Activated CD8-positive, alpha-beta T cell treated with anti-CD3 and anti-CD28 coated beads, Interleukin-2, amount 10 ng/mL, durations not matched to agents 7 days and 5 days (primary cell): ENCODE measurements at regions of chr10 and their contacts with region 1.

Region 1: GRCh38 chr10:97425964-97426775 is at the start of gene PGAM1:
- DNase-seq: peak; percentile 96
- ATAC-seq: peak; percentile 89
- H3K4me3 Mint-ChIP-seq: peak within 1 kb of the TSS; percentile 91
- H3K27ac Mint-ChIP-seq: peak within 1 kb of the TSS; percentile 94
- H3K4me1 Mint-ChIP-seq: peaks cover 40% of the 10 kb centered on the region
- H3K27me3 Mint-ChIP-seq: no peaks in the 10 kb centered on the region
- total RNA-seq, gene PGAM1: 517 to 529 TPM

Region 2: DNA sequence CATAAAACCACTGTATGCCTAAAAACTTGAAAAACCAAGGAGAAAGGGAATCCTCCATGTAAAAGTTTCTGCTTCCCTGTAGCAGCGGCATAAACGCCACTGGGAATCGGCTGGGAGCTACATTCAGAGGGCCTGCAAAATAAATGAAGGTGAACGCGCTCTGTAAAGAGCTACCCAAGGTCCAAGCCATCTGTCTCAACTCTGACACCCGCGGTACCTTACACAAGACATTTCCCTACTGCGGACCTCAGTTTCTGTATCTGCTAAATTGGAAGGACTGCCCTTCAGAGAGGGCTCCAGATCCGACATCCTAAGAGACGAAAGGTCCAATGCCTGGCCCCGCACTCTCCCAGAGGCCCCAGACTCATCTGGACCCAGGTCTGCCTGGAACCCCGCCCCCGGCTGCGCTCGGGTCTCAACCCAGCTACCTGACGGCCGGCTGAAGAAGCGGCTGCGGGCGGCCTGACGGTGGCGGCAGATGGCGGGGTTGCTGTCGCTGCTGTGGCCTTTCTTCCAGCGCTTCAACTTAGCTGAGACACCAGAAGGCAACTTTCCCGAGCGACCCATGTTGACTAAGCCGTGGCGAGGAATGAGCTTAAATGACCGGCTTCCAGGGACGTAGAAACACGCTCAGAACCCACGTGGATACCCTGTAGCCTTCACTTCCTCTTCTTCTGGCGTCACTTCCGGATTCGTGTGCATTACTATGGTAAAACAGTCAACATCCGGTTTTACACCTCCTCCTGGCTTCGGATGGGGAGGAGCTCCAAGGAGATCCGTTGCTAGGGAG is 25.3 kb before region 1 on chr10 and contains the start of gene RRP12:
- CTCF ChIA-PET with region 1: interaction called, 9 read pairs
- POLR2A ChIA-PET with region 1: interaction called, 10 read pairs
- DNase-seq: peak; percentile 95
- ATAC-seq: peak; percentile 87
- H3K4me3 Mint-ChIP-seq: peak within 1 kb of the TSS; percentile 95
- H3K27ac Mint-ChIP-seq: peak within 1 kb of the TSS; percentile 96
- H3K4me1 Mint-ChIP-seq: peaks cover 19% of the 10 kb centered on the region
- H3K27me3 Mint-ChIP-seq: no peaks in the 10 kb centered on the region
- total RNA-seq, gene RRP12: 30.9 to 35.6 TPM

Region 3: GRCh38 chr10:97407211-97407951 is 18.8 kb before region 1 on chr10:
- CTCF ChIA-PET with region 1: interaction called, 34 read pairs
- POLR2A ChIA-PET with region 1: interaction called, 10 read pairs
- DNase-seq: peak; percentile 79
- ATAC-seq: peak; percentile 95
- H3K4me3 Mint-ChIP-seq: peak overlapping the region; percentile 29
- H3K27ac Mint-ChIP-seq: peak overlapping the region; percentile 73
- H3K4me1 Mint-ChIP-seq: peaks cover 19% of the 10 kb centered on the region
- H3K27me3 Mint-ChIP-seq: no peaks in the 10 kb centered on the region

Region 4: GRCh38 chr10:97412891-97413304 is 13.3 kb before region 1 on chr10:
- CTCF ChIA-PET with region 1: interaction called, 34 read pairs
- POLR2A ChIA-PET with region 1: interaction called, 10 read pairs
- DNase-seq: peak; percentile 58
- ATAC-seq: peak; percentile 6
- H3K4me3 Mint-ChIP-seq: peak overlapping the region; percentile 18
- H3K27ac Mint-ChIP-seq: peak overlapping the region; percentile 84
- H3K4me1 Mint-ChIP-seq: peaks cover 57% of the 10 kb centered on the region
- H3K27me3 Mint-ChIP-seq: no peaks in the 10 kb centered on the region

Region 5: DNA sequence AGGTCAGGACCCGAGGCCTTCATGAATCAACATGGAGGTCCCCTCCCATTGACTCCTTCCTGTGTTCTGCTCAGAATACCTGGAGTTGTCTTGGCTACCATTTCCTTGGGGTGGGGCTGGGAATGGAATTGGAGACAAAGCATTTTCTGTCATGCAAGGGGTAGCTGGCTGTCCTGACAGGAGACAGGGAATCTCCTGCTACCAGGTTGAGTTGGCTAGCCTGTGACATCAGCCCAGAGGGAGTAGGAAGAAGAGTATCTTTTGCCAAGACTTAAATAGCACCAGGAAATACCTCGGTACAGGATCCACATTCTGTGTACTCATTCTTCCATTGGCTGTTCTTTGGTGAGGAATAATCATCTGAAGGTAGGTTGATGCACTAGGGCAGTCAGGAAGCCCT is 24.7 kb after region 1 on chr10:
- CTCF ChIA-PET with region 1: no interaction called
- POLR2A ChIA-PET with region 1: no interaction called
- DNase-seq: no peak
- ATAC-seq: no peak
- H3K4me3 Mint-ChIP-seq: no peak overlapping the region
- H3K27ac Mint-ChIP-seq: no peak overlapping the region
- H3K4me1 Mint-ChIP-seq: peaks cover 36% of the 10 kb centered on the region
- H3K27me3 Mint-ChIP-seq: no peaks in the 10 kb centered on the region